Prostate gland (tissue), 2 donors: ENCODE measurements at regions of chr2 and their contacts with region 1.

Region 1: GRCh38 chr2:186503848-186504606 is 18.0 kb downstream of the ZC3H15 start:
- DNase-seq: no peak
- H3K4me3 ChIP-seq: no peak overlapping the region
- H3K27ac ChIP-seq: no peak overlapping the region
- H3K4me1 ChIP-seq: no peaks in the 10 kb centered on the region
- H3K27me3 ChIP-seq: no peaks in the 10 kb centered on the region
- CTCF ChIP-seq: peak in 3 of 4 experiments; percentile 63 to 74 (median 65)
- POLR2A ChIP-seq: no peak

Region 2: GRCh38 chr2:186641807-186642321 is 137.8 kb after region 1 on chr2:
- intact Hi-C with region 1: loop called (anchors 2 kb)
- DNase-seq: peak; percentile 51
- H3K4me3 ChIP-seq: no peak overlapping the region
- H3K27ac ChIP-seq: no peak overlapping the region
- H3K4me1 ChIP-seq: no peaks in the 10 kb centered on the region
- H3K27me3 ChIP-seq: no peaks in the 10 kb centered on the region
- CTCF ChIP-seq: peak; percentile 15 to 76 (median 60)
- POLR2A ChIP-seq: no peak